Aorta (tissue), 5 donors: ENCODE measurements at regions of chr14 and their contacts with region 1.

Region 1: DNA sequence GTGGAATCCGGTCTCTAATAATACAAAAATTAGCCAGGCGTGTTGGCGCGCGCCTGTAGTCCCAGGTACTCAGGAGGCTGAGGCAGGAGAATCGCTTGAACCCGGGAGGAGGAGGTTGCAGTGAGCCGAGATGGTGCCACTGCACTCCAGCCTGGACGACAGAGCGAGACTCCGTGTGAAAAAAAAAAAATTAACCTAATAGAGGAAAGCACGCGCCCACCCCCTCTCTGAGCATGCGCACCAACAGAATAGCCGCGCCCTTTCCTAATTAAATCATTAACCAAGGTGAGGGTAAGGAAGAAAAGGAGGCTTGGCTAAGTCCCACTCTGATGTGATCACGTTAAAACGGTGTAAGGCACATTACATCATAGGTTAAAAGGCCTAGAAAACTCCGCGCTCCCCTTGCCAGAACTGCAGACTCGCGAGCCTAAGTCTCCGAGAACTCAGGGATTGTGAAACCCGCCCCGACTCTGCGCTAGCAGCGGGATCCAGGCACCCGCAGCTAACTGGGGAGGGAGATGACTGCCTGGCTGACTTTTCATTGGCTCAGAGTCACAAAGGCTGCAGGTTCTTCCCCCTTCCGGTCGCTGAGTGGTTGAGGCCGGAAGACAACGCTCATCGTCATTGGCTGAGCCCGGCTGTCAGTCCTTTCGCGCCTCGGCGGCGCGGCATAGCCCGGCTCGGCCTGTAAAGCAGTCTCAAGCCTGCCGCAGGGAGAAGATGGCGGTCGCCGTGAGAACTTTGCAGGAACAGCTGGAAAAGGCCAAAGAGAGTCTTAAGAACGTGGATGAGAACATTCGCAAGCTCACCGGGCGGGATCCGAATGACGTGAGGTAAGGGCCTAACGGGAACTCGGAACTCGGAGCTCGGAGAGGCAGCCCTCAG is at the start of gene PNN:
- DNase-seq: peak; percentile 97 to 98
- ATAC-seq: peak; percentile 97
- H3K4me3 ChIP-seq: peak within 1 kb of the TSS; percentile 66 to 78
- H3K27ac ChIP-seq: peak within 1 kb of the TSS in 1 of 2 donors; percentile 86
- H3K4me1 ChIP-seq: no peaks in the 10 kb centered on the region
- H3K27me3 ChIP-seq: no peaks in the 10 kb centered on the region
- total RNA-seq, gene PNN: 53.2 to 56.9 TPM

Region 2: GRCh38 chr14:39102969-39103957 is 71.5 kb before region 1 on chr14 and contains the start of gene SEC23A:
- intact Hi-C with region 1: loop called in 1 of 2 experiments (anchors 5 kb)
- DNase-seq: peak; percentile 95 to 97
- ATAC-seq: peak; percentile 99
- H3K4me3 ChIP-seq: peak within 1 kb of the TSS; percentile 73 to 93
- H3K27ac ChIP-seq: peak within 1 kb of the TSS; percentile 96 to 97
- H3K4me1 ChIP-seq: peaks cover 0 to 4% of the 10 kb centered on the region in 2 donors
- H3K27me3 ChIP-seq: no peaks in the 10 kb centered on the region
- total RNA-seq, gene SEC23A: 143 to 172 TPM

Region 3: DNA sequence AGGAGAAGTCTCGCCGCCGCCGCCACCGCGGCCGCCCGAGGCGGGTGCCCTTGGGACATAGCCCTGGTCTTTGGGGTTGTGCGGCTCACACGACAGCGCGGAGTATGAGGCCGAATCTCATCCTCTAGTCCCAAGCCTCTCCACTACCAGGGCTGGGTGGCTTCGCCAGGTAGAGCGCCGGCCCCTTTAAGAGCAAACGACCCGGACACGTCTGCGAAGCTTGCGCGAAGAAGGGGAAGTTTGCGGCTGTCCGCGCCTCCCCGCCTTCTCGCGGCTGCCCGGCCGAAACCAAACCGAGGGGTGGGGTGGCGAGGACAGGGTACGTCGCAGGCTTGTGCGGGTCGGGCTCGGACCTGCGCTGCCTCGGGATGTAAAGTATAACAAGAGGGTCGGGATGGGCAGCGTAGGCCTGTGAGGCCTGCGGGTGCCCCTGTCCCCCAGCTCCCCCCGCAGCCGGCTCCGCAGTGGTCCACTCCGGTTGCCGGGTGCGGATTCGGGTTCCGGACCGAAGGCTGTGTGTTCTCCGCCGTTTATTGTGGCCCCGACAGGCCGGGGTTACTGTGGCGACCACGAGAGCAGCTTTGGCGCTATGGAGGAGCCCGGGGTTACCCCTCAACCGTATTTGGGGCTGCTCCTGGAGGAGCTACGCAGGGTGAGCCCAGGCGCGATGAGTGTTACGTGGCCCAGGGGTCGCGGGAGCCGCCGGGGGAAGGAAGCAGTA is 92.2 kb after region 1 on chr14:
- intact Hi-C with region 1: loop called (anchors 2 to 5 kb)
- DNase-seq: peak; percentile 91 to 93
- ATAC-seq: peak; percentile 97
- H3K4me3 ChIP-seq: peak overlapping the region; percentile 63 to 86
- H3K27ac ChIP-seq: peak overlapping the region; percentile 47 to 68
- H3K4me1 ChIP-seq: no peaks in the 10 kb centered on the region
- H3K27me3 ChIP-seq: no peaks in the 10 kb centered on the region

Region 4: DNA sequence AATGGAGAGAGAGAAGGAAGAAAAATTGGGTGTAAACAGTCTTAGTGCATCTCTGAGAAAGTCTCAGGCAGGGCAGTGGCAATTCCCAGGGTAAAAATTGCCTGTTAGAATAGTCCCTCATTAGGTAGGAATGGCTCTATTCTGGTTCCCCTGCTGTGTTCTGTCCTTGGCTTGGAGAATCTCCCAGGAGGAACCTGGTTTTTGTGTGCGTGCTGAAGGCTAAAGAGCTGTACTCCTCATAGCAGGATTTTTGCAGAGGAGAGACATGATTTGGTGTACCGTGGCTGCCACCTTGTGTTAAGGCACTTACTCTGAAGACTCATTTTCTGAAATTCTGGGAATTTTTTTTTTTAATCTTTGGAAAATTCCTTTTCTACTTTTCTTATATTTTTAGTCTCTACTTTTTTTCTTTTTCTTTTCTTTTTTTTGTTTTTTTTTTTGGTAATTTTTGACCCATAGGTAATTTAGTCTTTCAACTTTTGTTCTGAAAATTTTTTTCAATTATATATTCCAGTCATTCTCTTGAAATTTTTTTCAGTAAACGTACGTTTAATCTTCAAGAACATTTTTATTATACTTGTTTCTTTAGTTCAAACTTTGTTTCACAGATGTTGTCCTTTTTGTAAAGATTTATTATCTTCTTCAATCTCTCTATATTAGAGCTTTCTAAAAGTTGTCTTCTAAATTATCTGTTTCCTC is 193.6 kb after region 1 on chr14:
- intact Hi-C with region 1: loop called (anchors 5 kb)
- DNase-seq: peak in 1 of 2 donors; percentile 54
- ATAC-seq: peak; percentile 60
- H3K4me3 ChIP-seq: no peak overlapping the region
- H3K27ac ChIP-seq: no peak overlapping the region
- H3K4me1 ChIP-seq: peaks cover 0 to 1% of the 10 kb centered on the region in 2 donors
- H3K27me3 ChIP-seq: no peaks in the 10 kb centered on the region

Region 5: DNA sequence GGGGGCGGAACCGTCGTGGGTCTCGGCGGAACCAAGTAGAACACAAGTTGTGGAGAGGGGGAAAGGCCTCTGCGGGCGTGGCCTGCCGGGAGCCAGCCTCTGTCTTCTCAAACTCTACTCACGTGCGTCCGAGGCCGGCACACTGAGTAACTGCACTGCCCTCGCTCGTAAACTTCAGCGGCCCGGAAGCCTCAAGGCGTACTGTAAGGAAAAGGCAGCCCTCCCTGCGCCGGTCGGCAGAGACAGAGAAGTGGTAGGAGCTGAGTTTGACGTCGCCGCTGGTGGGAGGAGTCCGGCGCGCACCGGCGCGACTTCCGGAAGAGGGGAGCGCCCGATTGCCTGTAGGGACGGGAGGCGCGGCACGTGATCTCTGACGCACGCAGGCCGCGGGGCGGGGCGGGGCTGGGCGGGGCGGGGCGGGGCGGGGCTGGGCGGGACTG is 257.4 kb after region 1 on chr14 and contains the start of gene FBXO33:
- intact Hi-C with region 1: loop called (anchors 5 kb)
- DNase-seq: peak; percentile 98 to 99
- ATAC-seq: peak; percentile 96
- H3K4me3 ChIP-seq: peak within 1 kb of the TSS; percentile 96 to 97
- H3K27ac ChIP-seq: peak within 1 kb of the TSS; percentile 74 to 100
- H3K4me1 ChIP-seq: peaks cover 2 to 11% of the 10 kb centered on the region in 2 donors
- H3K27me3 ChIP-seq: no peaks in the 10 kb centered on the region
- total RNA-seq, gene FBXO33: 13.0 to 14.3 TPM